Activated CD4-positive, alpha-beta T cell treated with anti-CD3 and anti-CD28 coated beads for 36 hours (primary cell): ENCODE measurements at regions of chr1 and their contacts with region 1.

Region 1: DNA sequence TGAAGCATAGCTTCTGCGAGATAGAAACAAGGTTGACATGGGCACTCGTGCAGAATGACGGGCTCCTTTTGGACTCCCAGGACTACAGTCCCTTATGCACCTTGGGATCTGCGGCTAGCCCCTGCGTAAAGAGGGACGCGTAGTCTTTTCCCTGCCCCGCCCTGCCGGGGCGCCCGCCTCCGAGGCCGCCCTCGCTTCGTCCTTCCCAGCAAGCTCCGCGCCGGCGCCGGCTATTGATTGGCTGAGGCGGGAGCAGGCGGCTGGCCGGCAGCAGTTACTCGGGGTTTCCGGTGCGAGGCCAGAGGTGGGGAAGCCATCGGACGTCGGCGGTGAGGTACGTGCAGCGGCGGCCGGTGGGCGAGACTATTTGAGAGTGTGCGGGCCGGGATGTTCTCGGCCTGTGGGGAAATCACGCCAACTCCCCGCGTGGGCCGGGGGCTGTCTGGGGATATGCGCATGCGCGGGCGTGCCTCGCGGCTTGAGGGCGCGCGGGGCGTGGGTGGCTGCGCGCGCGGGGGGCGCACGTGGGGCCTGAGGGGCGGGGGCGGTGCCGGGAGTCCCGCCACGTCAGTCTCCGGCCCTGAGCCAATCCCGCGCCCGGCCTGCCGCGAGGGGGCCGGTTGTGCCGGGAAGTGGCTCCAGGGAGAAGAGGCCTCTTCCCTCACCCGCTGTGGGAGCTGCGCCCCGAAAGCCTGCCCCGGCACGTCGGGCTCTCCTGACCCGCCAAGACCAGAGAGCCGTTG is at the start of gene TXLNA:
- DNase-seq: peak; percentile 96
- ATAC-seq: peak; percentile 93
- H3K4me3 Mint-ChIP-seq: peak within 1 kb of the TSS; percentile 86
- H3K27ac Mint-ChIP-seq: peak within 1 kb of the TSS; percentile 98
- H3K4me1 Mint-ChIP-seq: peaks cover 44% of the 10 kb centered on the region
- H3K27me3 Mint-ChIP-seq: no peaks in the 10 kb centered on the region
- total RNA-seq, gene TXLNA: 79.5 to 79.7 TPM

Region 2: DNA sequence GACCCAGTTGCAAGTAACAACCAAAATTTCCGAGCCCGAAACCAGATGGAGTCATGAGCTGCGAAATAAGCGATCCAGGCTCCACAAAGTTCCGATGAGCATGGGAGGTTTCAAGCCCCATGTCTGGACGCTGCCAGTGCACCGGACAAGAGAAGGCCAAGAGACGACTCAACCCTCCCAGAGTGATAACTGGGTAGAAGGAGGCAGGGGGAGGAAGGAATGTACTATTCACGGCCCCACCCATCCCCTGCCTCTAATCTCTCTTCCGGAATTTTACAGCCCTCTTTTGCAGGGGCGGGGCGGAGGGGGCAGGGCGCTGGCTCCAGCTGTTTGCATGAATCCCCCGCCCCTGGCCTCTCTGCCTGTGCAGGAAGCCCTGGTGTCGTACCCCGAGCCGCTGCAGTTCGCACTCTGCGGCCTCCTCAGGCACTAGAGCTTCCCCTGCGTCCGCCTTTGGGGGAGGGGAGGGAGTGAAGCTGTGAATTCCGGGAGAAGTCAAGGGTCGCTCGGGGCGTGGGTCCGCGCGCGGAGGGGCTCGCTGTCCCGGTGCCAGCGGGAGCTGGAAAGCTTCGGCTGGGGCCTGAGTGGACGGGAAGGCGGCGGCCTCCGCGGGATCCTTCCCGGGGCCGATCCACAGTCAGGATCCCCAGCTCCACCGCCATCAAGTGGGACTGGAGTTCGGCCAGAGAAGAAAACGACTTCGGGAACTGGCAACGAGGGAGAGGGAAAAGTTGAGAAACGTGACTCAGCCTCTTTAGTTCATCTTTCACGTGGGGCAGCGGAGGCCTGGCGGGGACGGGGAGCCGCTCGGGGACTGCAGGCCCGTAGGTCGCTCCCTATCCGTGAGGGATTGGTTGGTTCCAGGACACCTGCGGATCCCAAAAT is 235.2 kb before region 1 on chr1:
- CTCF ChIA-PET with region 1: no interaction called
- POLR2A ChIA-PET with region 1: no interaction called
- intact Hi-C with region 1: no loop called
- DNase-seq: peak; percentile 91
- ATAC-seq: peak; percentile 65
- H3K4me3 Mint-ChIP-seq: peak overlapping the region; percentile 65
- H3K27ac Mint-ChIP-seq: peak overlapping the region; percentile 88
- H3K4me1 Mint-ChIP-seq: peaks cover 52% of the 10 kb centered on the region
- H3K27me3 Mint-ChIP-seq: no peaks in the 10 kb centered on the region

Region 3: DNA sequence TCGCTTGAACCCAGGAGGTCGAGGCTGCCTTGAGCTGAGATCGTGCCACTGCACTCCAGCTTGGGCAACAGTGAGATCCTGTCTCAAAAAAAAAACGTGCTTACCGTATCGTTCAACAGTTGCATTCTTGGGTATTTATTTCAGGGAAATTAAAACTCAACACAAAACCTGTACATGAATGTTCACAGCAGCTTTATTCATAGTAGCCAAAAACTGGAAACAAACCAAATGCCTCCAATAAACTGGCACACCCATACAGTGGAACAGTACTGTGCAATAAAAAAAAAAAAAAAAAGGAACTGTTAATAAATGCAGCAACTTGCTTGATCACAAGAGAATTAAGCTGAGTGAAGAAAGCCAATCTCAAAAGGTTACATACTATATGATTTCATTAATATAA is 159.3 kb before region 1 on chr1:
- CTCF ChIA-PET with region 1: no interaction called
- POLR2A ChIA-PET with region 1: interaction called, 10 read pairs
- intact Hi-C with region 1: no loop called
- DNase-seq: no peak
- ATAC-seq: no peak
- H3K4me3 Mint-ChIP-seq: no peak overlapping the region
- H3K27ac Mint-ChIP-seq: no peak overlapping the region
- H3K4me1 Mint-ChIP-seq: peaks cover 46% of the 10 kb centered on the region
- H3K27me3 Mint-ChIP-seq: no peaks in the 10 kb centered on the region

Region 4: GRCh38 chr1:32200226-32201010 is 20.8 kb after region 1 on chr1 and contains the start of gene CCDC28B:
- CTCF ChIA-PET with region 1: interaction called, 4 read pairs
- POLR2A ChIA-PET with region 1: interaction called, 7 read pairs
- intact Hi-C with region 1: loop called (anchors 1 to 2 kb)
- DNase-seq: peak; percentile 77
- ATAC-seq: peak; percentile 53
- H3K4me3 Mint-ChIP-seq: peak within 1 kb of the TSS; percentile 71
- H3K27ac Mint-ChIP-seq: peak within 1 kb of the TSS; percentile 86
- H3K4me1 Mint-ChIP-seq: peaks cover 57% of the 10 kb centered on the region
- H3K27me3 Mint-ChIP-seq: no peaks in the 10 kb centered on the region
- total RNA-seq, gene CCDC28B: 13.0 to 19.3 TPM

Region 5: DNA sequence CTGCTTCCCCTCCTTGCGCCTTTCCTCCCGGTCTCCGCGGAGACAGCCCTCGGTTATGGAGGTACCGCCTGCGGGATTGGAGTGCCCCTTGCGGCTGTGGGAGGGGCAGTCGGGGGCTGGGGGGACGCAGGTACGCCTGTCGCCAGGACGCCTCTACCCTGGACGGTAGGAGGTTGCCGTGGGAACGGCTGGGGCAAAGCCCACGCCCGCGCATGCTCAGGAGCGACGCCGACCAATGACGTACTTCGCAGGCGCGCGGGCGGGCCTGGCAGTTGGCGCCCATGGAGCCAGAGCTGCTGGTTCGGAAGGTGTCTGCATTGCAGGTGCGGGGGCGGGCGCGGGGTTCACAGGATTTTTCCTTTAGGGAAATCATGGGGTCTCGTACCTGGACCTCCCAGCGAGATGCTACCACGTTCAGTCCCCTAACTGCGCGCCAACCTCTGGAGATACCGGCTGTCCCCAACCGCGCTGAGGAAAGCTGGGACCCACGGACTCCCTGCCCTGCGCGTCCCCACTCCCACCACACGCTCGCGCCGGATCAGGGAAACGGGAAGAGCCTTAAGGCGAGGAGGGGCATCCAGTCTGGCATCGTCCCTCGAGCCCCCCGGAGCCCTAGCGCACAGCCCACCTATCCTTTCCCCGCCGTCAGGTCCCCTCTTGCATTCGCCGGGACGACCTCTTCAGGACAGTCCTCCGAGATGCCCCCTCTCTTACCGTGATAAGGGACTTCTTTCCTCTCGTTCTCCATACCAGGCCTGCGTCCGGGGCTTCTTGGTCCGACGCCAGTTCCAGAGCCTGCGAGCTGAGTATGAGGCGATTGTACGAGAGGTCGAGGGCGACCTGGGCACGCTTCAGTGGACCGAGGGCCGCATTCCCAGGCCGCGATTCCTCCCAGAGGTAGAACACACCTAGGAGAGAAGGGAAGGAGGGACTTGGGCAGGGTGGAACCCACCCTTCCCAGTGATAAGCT is 26.1 kb after region 1 on chr1 and contains the start of gene IQCC:
- CTCF ChIA-PET with region 1: interaction called, 3 read pairs
- POLR2A ChIA-PET with region 1: interaction called, 7 read pairs
- intact Hi-C with region 1: loop called (anchors 1 to 2 kb)
- DNase-seq: peak; percentile 94
- ATAC-seq: peak; percentile 75
- H3K4me3 Mint-ChIP-seq: peak within 1 kb of the TSS; percentile 90
- H3K27ac Mint-ChIP-seq: peak within 1 kb of the TSS; percentile 87
- H3K4me1 Mint-ChIP-seq: peaks cover 28% of the 10 kb centered on the region
- H3K27me3 Mint-ChIP-seq: no peaks in the 10 kb centered on the region
- total RNA-seq, gene IQCC: 4.4 to 5.0 TPM

Region 6: DNA sequence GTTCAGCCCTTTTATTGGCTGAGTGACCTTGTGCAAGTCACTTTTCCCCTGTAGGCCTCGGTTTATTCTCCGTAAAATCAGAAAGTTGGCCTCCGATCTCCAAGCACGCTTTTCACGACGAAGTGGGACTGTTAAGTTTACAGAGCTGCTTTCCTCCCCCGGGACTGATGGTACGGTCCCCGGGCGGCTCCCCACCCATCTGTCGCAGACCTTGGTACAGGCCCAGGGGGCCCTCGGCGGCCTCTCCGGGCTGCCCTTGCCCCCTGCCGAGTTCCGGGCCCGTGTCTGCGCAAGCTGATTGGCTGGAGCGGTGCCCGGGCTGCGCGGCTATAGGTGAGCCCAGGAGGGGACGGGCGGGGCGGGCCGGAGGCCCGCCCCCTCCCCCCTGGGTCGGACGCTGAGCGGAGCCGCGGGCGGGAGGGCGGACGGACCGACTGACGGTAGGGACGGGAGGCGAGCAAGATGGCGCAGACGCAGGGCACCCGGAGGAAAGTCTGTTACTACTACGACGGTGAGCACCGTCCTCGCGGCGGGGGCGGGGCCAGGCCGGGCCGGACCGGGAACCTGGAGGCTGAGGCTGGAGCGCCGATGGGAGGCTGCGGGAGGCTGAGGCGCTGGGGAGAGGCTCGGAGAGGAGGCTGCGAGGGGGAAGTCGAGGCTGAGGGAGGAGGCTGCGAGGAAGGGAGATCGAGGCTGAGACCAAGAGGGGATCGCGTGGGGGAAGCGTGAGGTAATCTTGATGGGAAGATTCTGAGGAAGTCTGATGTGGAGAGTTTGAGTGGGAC is 112.3 kb after region 1 on chr1 and contains the start of gene HDAC1:
- CTCF ChIA-PET with region 1: no interaction called
- POLR2A ChIA-PET with region 1: interaction called, 6 read pairs
- intact Hi-C with region 1: loop called in 1 of 2 experiments (anchors 1 kb)
- DNase-seq: peak; percentile 99
- ATAC-seq: peak; percentile 98
- H3K4me3 Mint-ChIP-seq: peak within 1 kb of the TSS; percentile 100
- H3K27ac Mint-ChIP-seq: peak within 1 kb of the TSS; percentile 99
- H3K4me1 Mint-ChIP-seq: peaks cover 43% of the 10 kb centered on the region
- H3K27me3 Mint-ChIP-seq: no peaks in the 10 kb centered on the region
- total RNA-seq, gene HDAC1: 132 to 146 TPM

Region 7: DNA sequence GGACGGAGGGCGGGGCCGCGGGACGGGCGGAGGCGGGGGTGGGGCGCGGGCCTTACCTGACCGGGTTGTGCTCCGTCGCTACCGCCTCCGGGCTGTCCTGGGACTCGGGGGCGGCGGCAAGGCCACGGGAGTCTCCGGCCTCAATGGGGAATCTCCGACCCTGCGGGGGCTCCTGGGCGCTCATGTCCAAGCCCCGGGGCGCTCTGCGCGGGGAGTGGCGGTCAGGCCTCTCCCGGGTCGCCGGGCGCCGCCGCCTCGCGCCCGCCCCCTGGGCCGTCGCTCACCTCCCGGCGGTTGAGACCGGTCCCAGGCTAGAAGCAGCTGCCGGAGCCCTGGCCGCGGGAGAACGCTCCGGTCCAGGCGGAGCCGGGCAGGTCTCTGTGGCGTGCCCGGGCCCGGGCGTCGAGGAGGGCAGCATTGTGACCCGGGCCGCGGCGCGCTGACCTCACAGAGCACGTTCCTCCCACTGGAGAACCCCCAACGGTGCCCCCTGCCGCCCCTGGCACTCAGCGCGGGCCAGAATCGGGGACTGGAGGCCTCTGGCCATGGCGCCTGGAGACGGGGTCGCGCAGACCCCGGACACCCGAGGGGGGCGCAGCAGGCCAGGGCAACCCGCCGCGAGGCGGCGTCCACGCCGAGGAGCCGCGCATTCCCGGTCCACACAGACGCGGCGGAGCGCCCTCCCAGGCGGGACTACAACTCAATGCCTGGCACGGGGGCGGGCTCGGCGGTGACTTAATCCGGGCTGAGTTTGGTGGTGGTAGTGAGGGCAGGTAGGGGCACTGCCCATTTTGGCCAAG is 182.3 kb after region 1 on chr1:
- CTCF ChIA-PET with region 1: no interaction called
- POLR2A ChIA-PET with region 1: no interaction called
- intact Hi-C with region 1: no loop called
- DNase-seq: peak; percentile 56
- ATAC-seq: peak; percentile 49
- H3K4me3 Mint-ChIP-seq: no peak overlapping the region
- H3K27ac Mint-ChIP-seq: no peak overlapping the region
- H3K4me1 Mint-ChIP-seq: peaks cover 18% of the 10 kb centered on the region
- H3K27me3 Mint-ChIP-seq: peaks cover 2% of the 10 kb centered on the region